ENCODE measurements at regions of chr10 and their contacts with region 1.

Region 1: GRCh38 chr10:127534074-127534473 is 15.0 kb upstream of the NPS start:
- DNase-seq: no peak
- ATAC-seq: no peak
- H3K4me3 ChIP-seq: no peak overlapping the region
- H3K27ac ChIP-seq: no peak overlapping the region
- H3K4me1 ChIP-seq: no peaks in the 10 kb centered on the region
- H3K27me3 ChIP-seq: no peaks in the 10 kb centered on the region
- CTCF ChIP-seq: no peak
- POLR2A ChIP-seq: no peak
- RAD21 ChIP-seq: no peak

Region 2: GRCh38 chr10:127506094-127506493 is 28.0 kb before region 1 on chr10:
- CTCF ChIA-PET with region 1: no interaction called
- POLR2A ChIA-PET with region 1: no interaction called
- dilution Hi-C with region 1: no loop called
- in situ Hi-C with region 1: no loop called
- intact Hi-C with region 1: loop called (anchors 1 kb)
- DNase-seq: no peak
- ATAC-seq: no peak
- H3K4me3 ChIP-seq: no peak overlapping the region
- H3K27ac ChIP-seq: no peak overlapping the region
- H3K4me1 ChIP-seq: no peaks in the 10 kb centered on the region
- H3K27me3 ChIP-seq: no peaks in the 10 kb centered on the region
- CTCF ChIP-seq: no peak
- POLR2A ChIP-seq: no peak
- RAD21 ChIP-seq: no peak

Measured in IMR-90 (cell line).